GM12878 (cell line): ENCODE measurements at regions of chr18 and their contacts with region 1.

Region 1: DNA sequence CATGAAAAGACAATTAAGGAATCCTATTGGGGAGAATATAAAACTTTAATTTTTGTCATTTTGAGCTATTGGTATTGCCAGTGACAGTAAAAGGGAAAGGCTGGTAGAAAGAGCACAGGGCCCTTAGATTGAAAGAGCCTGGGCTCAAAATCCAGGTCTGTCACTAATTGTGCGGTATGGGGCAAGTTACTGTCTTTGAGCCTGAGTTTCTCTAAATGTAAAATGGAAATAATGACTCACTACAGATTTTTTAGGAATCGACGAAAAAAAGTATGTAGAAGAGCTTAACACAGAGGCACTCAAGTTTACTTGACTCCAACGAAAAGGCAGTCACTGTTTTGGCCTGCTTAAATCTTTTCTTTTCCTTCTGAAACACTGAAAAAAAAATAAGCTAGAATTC is 7.0 kb downstream of the NDUFV2 start:
- DNase-seq: no peak
- ATAC-seq: no peak
- H3K4me3 ChIP-seq: peak overlapping the region; percentile 44; the same call in 1 of the 2 replicates
- H3K27ac ChIP-seq: no peak overlapping the region; the same call in 1 of the 2 replicates
- H3K4me1 ChIP-seq: peaks cover 9% of the 10 kb centered on the region
- H3K27me3 ChIP-seq: no peaks in the 10 kb centered on the region
- CTCF ChIP-seq: no peak
- EP300 ChIP-seq: no peak
- POLR2A ChIP-seq: no peak
- RAD21 ChIP-seq: no peak

Region 2: GRCh38 chr18:9095297-9096006 is 14.1 kb before region 1 on chr18:
- CTCF ChIA-PET with region 1: interaction called, 4 read pairs
- POLR2A ChIA-PET with region 1: interaction called, 8 read pairs
- RAD21 ChIA-PET with region 1: interaction called, 3 read pairs
- SMC1A ChIA-PET with region 1: interaction called, 16 read pairs
- in situ Hi-C with region 1: no loop called
- intact Hi-C with region 1: no loop called
- DNase-seq: peak; percentile 63
- ATAC-seq: peak; percentile 92
- H3K4me3 ChIP-seq: peak overlapping the region; percentile 24; the same call in 1 of the 2 replicates
- H3K27ac ChIP-seq: peak overlapping the region; percentile 95
- H3K4me1 ChIP-seq: peaks cover 19% of the 10 kb centered on the region
- H3K27me3 ChIP-seq: no peaks in the 10 kb centered on the region
- CTCF ChIP-seq: no peak
- EP300 ChIP-seq: peak; percentile 20 to 55; a peak in 3 of 4 replicates
- POLR2A ChIP-seq: peak; percentile 70
- RAD21 ChIP-seq: no peak